Astrocyte of the cerebellum (primary cell): ENCODE measurements at regions of chr17 and their contacts with region 1.

Region 1: GRCh38 chr17:8753976-8754440 is 4.3 kb downstream of the SPDYE4 start:
- DNase-seq: no peak
- H3K4me3 ChIP-seq: no peak overlapping the region
- CTCF ChIP-seq: peak; percentile 40

Region 2: DNA sequence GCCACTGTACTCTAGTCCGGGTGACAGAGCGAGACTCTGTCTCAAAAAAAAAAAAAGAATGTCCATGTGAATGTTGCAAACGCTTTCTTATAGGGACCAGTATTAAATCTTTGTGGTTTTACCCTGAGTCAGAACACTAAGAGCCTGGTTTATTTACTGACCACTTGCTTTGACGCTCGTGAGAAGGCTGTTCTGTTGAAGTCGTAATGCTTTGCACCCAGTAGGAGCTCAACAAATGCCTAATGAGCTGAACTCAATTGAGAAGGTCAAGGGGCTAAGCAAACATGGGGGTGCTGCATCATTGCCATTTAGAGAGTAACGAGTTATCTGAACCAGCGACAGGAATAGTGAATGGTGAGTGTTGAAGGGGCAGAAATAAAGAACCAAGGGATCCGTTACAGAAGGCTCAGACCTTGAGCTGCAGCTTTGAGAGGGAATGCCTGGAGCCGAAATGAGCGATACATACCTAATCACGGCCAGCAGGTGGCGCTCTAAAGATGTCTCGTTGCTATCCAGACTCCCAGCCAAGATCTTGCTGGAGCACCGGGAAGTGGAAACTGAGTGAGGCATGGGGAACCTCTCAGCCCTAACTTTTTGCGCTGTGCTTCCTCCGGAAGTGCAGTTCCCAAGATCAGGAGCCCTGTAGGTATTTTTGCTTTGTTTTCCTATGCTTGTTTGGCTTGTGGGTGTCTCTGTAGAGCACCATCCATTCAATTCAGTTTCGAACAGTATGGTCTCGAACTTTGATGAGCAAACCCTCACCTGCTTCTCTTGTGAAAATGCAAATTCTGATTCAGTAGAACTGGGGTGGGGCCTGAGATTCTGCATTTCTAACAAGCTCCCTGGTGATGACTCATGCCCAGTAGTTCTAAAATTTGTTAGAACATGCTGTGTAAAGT is 343.8 kb before region 1 on chr17:
- in situ Hi-C with region 1: loop called (anchors 25 kb)
- DNase-seq: peak; percentile 79
- H3K4me3 ChIP-seq: no peak overlapping the region
- CTCF ChIP-seq: peak; percentile 84

Region 3: DNA sequence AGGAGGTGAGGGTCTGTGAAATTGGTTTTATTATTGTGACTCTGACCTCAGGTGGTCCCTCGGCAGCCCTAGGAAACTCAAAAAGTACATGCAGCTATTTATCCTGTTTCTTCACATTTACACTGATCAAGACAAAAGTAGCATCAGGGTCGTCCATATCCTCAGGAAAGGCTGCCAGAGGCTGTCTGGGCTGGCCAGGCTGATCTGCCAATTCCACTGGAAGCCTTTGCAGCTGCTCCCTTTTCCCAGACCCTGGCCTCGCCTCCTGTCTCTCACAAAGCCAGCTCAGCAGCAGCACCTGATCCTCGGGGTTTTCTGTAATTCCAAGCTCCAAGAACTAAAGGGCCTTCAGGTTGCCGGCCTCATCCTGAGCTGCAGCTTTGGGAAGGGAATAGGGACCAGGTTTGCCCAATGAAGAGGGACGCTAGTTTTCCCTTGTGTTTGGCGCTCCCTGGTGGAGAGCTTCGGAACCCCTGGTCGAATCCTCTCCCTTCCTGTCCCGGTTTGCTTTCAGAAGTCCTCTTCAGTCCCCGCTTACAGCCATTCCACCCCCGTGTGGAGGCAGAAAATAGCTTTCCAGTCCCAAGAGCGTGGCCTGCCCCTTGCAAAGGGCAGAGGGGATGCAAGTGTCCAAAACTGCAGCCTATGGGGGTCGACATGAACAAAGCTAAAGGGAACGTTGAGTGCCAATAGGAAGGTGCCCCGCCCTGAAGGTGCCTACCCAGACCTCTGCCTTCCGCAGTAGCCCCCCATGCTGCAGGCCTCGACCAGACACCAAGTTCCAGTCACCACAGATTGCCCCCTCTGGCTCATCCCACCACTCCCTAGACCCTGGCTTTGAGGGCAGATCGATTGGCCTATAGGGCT is 31.8 kb after region 1 on chr17:
- in situ Hi-C with region 1: no loop called
- DNase-seq: peak; percentile 32
- H3K4me3 ChIP-seq: no peak overlapping the region
- CTCF ChIP-seq: peak; percentile 85